CD14-positive monocyte (primary cell): ENCODE measurements at regions of chr12 and their contacts with region 1.

Region 1: GRCh38 chr12:8949342-8950220 is at the start of gene M6PR:
- DNase-seq: peak; percentile 92 to 95 (median 95)
- H3K4me3 ChIP-seq: peak within 1 kb of the TSS; percentile 82 to 97 (median 93)
- H3K4me3 Mint-ChIP-seq: peak within 1 kb of the TSS; percentile 98
- H3K27ac ChIP-seq: peak within 1 kb of the TSS; percentile 98 to 99
- H3K27ac Mint-ChIP-seq: peak within 1 kb of the TSS; percentile 95 to 100 (median 99)
- H3K4me1 ChIP-seq: peaks cover 25 to 41% of the 10 kb centered on the region in 2 donors
- H3K4me1 Mint-ChIP-seq: peaks cover 40% of the 10 kb centered on the region
- H3K27me3 ChIP-seq: no peaks in the 10 kb centered on the region
- H3K27me3 Mint-ChIP-seq: peaks cover 0 to 4% (median 0%) of the 10 kb centered on the region in 3 donors
- CTCF ChIP-seq: no peak
- polyA plus RNA-seq, gene M6PR: 158 to 285 (median 268) TPM

Region 2: DNA sequence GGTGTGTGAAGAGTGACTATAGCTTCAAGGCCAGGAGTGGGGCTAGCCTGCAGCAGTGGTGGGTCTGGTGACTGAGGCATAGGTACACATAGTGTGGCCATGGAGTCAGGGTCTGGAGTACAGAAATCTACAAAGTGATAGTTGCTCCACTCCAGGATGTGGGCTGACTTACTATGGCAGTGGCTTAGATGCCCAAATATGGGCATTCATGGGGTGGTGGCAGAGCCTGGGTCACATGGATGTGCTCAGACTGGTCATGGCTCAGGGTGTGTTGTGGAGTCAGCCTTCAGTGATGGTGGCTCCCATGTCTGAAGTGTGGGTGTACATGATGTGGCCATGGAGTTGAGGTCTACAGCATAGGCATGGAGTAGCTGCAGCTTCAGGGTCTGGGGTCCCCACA is 466.5 kb before region 1 on chr12:
- intact Hi-C with region 1: no loop called
- DNase-seq: no peak
- H3K4me3 ChIP-seq: no peak overlapping the region
- H3K4me3 Mint-ChIP-seq: peak overlapping the region in 1 of 2 donors; percentile 46
- H3K27ac ChIP-seq: no peak overlapping the region
- H3K27ac Mint-ChIP-seq: peak overlapping the region in 1 of 7 donors; percentile 30
- H3K4me1 ChIP-seq: no peaks in the 10 kb centered on the region
- H3K4me1 Mint-ChIP-seq: peaks cover 17% of the 10 kb centered on the region
- H3K27me3 ChIP-seq: peaks cover 0 to 8% of the 10 kb centered on the region in 2 donors
- H3K27me3 Mint-ChIP-seq: peaks cover 5 to 13% (median 7%) of the 10 kb centered on the region in 3 donors
- CTCF ChIP-seq: no peak

Region 3: GRCh38 chr12:8562310-8562709 is 387.3 kb before region 1 on chr12:
- intact Hi-C with region 1: no loop called
- DNase-seq: no peak
- H3K4me3 ChIP-seq: no peak overlapping the region
- H3K4me3 Mint-ChIP-seq: no peak overlapping the region
- H3K27ac ChIP-seq: no peak overlapping the region
- H3K27ac Mint-ChIP-seq: peak overlapping the region in 1 of 7 donors; percentile 42
- H3K4me1 ChIP-seq: peaks cover 30 to 39% of the 10 kb centered on the region in 2 donors
- H3K4me1 Mint-ChIP-seq: peaks cover 37% of the 10 kb centered on the region
- H3K27me3 ChIP-seq: no peaks in the 10 kb centered on the region
- H3K27me3 Mint-ChIP-seq: peaks cover 0 to 1% (median 0%) of the 10 kb centered on the region in 3 donors
- CTCF ChIP-seq: no peak

Region 4: DNA sequence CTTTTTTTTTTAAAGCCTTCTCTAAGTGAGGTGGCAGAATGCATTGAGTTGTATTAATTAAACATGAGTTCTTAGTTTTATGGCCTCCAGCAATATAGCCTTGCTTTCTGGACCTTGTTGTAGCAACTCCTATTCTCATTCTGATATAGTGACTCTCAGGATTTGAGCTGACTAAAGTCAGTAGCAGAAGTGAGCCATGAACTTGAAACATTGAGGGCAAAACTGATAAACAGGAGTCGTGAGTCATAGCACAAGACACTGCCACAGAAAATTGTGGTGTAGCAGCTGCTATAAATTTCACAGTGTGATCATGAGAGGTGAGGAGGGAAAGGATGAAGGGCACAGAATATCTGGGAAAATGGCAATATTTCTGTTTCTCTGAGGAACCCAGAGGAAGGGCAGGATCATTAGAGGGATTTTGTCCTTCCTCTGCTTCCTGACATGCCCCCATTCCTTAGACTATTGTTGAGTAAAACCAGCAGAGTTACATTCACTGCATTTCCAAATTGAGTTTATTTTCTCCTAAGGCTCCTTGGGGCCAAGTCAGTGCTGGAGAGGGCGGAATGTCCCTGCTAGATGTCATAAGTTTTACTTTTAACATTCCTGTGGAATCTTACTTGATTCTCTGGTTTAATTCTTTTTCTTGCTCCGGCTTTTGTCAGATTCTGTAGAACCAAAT is 47.2 kb after region 1 on chr12:
- intact Hi-C with region 1: no loop called
- DNase-seq: peak in 2 of 3 donors; percentile 7 to 21
- H3K4me3 ChIP-seq: no peak overlapping the region
- H3K4me3 Mint-ChIP-seq: no peak overlapping the region
- H3K27ac ChIP-seq: peak overlapping the region in 1 of 2 donors; percentile 1
- H3K27ac Mint-ChIP-seq: peak overlapping the region in 2 of 7 donors; percentile 2 to 56
- H3K4me1 ChIP-seq: peaks cover 2 to 12% of the 10 kb centered on the region in 2 donors
- H3K4me1 Mint-ChIP-seq: peaks cover 20% of the 10 kb centered on the region
- H3K27me3 ChIP-seq: no peaks in the 10 kb centered on the region
- H3K27me3 Mint-ChIP-seq: peaks cover 0 to 1% (median 0%) of the 10 kb centered on the region in 3 donors
- CTCF ChIP-seq: no peak

Region 5: DNA sequence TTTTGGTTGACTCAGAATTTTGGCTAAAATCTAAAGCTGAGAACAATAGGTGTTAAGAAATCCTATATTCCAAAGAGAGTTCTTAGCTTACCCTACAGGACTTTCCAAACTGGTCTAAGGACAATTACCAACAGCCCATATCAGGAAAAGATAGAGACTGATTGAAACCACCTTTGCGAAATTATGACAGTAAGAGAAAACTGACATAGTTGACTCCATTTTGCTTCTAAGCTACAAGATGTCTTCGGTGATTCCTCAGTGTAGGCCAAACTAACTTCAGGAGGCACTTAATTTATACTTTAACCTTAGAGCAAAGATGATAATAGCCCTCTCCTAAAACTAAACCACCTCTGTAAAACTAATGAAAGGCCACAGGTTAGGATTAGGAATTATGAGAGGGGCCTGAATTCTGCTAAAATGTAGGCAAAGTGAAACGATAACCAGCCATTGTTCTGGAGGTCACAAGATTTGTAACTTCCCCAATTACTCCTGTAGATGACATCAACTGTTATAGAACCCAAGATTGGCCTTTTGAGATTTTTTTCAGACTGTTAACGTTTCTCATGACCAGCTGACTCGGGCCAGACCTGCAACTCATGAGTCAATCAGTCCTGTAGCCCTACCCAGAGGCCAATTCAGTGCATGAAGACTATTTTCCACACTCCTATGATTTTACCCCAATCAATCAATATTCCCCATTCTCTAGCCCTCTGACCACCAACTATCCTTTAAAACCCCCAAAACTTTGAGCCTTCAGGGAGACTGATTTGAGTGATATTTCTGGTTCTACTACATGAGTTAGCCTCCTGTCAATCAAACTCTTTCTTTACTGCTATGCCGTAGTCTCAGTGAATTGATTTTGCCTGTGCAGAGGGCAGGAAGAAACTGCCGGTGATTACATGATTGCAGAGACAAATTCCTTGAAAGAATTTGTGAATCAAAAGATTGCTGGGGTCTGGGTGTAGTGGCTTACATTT is 82.9 kb after region 1 on chr12:
- intact Hi-C with region 1: loop called in 1 of 2 experiments (anchors 5 kb)
- DNase-seq: peak; percentile 59 to 79 (median 68)
- H3K4me3 ChIP-seq: no peak overlapping the region
- H3K4me3 Mint-ChIP-seq: no peak overlapping the region
- H3K27ac ChIP-seq: peak overlapping the region in 1 of 2 donors; percentile 30
- H3K27ac Mint-ChIP-seq: peak overlapping the region in 5 of 7 donors; percentile 9 to 83 (median 65)
- H3K4me1 ChIP-seq: no peaks in the 10 kb centered on the region
- H3K4me1 Mint-ChIP-seq: peaks cover 8% of the 10 kb centered on the region
- H3K27me3 ChIP-seq: no peaks in the 10 kb centered on the region
- H3K27me3 Mint-ChIP-seq: no peaks in the 10 kb centered on the region
- CTCF ChIP-seq: no peak